Ascending aorta (tissue), 2 donors: ENCODE measurements at regions of chr10 and their contacts with region 1.

Region 1: GRCh38 chr10:49115015-49115795 is at the start of gene VSTM4:
- DNase-seq: peak in 1 of 2 donors; percentile 71
- H3K4me3 ChIP-seq: peak within 1 kb of the TSS; percentile 86 to 87
- H3K27ac ChIP-seq: peak within 1 kb of the TSS; percentile 86 to 94
- H3K4me1 ChIP-seq: peaks cover 12 to 48% of the 10 kb centered on the region in 2 donors
- H3K27me3 ChIP-seq: no peaks in the 10 kb centered on the region
- CTCF ChIP-seq: peak in 1 of 3 experiments; percentile 16
- total RNA-seq, gene VSTM4: 17.7 TPM

Region 2: GRCh38 chr10:48981310-48981907 is 133.8 kb before region 1 on chr10:
- intact Hi-C with region 1: loop called (anchors 1 kb)
- DNase-seq: peak in 1 of 2 donors; percentile 71
- H3K4me3 ChIP-seq: no peak overlapping the region
- H3K27ac ChIP-seq: no peak overlapping the region
- H3K4me1 ChIP-seq: peaks cover 0 to 3% of the 10 kb centered on the region in 2 donors
- H3K27me3 ChIP-seq: no peaks in the 10 kb centered on the region
- CTCF ChIP-seq: peak; percentile 80 to 91 (median 83)

Region 3: DNA sequence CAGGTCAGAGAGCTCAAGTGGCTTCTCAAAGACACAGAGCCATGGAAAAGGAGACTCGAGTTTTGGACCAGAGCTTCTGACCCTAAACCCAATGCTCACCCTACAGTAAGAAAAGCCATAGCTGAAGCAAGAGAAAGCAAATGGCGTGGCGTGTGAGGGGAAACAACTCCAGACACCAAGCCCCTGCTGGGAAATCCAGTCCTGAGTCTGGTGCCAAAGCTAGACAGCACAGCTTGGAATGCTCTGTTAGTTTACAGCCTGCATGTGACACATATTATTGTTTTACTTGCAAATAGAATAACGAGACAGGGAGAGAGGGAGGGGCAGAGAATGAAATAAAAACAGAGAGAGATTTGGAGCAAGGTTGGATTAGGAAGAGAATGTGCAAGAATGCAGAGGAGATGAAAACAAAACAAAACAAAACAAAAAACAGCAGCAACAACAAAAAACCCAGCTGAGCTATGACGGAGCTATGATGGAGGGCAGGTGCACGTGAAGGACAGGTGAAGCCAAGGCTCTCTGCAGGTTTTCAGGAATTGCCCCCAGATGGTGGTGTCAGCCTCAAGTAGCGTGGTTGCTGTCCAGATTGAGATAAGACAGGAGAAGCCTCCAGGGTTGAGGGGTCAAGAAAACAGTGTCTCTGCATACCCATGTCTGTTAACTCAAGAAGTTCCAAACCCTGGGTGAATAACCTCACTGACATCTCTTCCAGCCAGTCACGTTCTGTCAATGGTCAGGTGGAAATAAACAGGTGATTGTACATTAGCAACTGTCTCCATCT is 105.8 kb before region 1 on chr10:
- intact Hi-C with region 1: loop called (anchors 2 kb)
- DNase-seq: no peak
- H3K4me3 ChIP-seq: peak overlapping the region in 1 of 2 donors; percentile 28
- H3K27ac ChIP-seq: peak overlapping the region; percentile 39 to 40
- H3K4me1 ChIP-seq: peaks cover 5 to 23% of the 10 kb centered on the region in 2 donors
- H3K27me3 ChIP-seq: no peaks in the 10 kb centered on the region
- CTCF ChIP-seq: no peak

Region 4: DNA sequence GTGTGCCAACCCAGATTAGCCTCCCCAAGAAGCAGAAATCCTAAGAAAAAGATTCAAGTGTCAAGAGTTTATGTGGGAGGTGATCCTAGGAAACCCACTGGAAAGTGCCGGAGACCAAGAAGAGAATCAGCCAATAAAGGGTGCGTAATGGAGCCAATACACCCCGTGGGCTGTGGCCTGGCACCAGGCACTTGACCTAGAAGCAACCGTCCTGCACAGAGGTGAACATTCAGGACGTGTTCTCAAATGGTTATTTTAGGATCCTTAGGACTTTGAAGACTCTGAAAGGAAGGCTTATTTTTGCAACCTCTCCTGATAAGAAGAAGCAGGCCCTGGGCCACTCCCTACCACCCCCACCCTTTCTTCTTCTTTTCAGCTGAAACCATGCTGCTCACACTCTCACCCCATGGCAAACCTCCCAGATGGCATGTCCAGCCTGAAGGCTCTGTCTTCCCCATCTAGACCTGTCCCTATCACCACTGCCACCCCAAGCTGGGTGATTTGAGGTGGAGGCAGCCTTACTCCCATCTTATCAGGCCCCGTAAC is 46.5 kb before region 1 on chr10:
- intact Hi-C with region 1: no loop called
- DNase-seq: no peak
- H3K4me3 ChIP-seq: no peak overlapping the region
- H3K27ac ChIP-seq: no peak overlapping the region
- H3K4me1 ChIP-seq: peaks cover 0 to 4% of the 10 kb centered on the region in 2 donors
- H3K27me3 ChIP-seq: no peaks in the 10 kb centered on the region
- CTCF ChIP-seq: no peak

Region 5: GRCh38 chr10:49080071-49080470 is 35.1 kb before region 1 on chr10:
- intact Hi-C with region 1: loop called (anchors 2 kb)
- DNase-seq: peak in 1 of 2 donors; percentile 73
- H3K4me3 ChIP-seq: no peak overlapping the region
- H3K27ac ChIP-seq: peak overlapping the region; percentile 72 to 75
- H3K4me1 ChIP-seq: peaks cover 10 to 49% of the 10 kb centered on the region in 2 donors
- H3K27me3 ChIP-seq: no peaks in the 10 kb centered on the region
- CTCF ChIP-seq: no peak

Region 6: DNA sequence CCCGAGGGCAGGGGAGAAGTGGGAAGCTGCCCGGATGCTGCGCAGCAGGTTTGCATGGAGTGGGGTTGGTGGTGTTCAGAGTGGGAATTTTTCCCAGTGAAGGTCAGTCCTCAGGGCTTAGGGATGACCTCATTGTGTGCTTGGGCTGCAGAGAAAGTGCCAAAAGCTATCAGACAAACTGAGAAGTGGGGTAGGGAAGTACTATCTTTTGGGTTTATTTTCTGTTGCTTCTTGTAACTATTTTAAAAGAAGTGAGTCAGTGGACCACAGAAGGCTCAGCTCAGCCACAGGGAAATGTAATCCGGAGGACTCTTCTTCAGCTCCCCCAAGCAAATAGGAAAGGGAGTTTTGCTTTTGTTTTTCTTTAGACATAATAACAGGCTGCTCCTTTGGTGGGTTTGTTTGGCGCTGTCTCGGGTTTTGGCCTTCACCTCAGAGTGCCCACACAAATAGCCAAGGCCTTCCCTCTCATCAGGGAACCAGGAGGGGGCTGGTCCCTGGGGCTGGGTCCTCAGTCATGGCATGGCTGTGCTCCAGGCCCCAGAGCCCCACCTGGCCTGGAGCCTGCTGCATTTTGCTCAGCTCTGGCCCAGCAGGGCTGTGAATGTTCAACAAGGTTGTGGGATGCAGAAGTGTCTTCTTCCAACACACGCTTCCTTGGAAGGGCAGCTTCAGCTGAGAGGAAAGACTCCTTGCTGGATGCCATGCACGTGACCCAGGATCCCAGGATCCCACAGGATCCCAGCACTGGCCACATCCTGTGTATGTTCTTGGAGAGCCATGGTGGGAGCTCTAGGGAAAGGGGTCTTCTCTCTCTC is 24.0 kb after region 1 on chr10:
- intact Hi-C with region 1: loop called (anchors 2 kb)
- DNase-seq: no peak
- H3K4me3 ChIP-seq: no peak overlapping the region
- H3K27ac ChIP-seq: peak overlapping the region; percentile 69 to 77
- H3K4me1 ChIP-seq: peaks cover 0 to 27% of the 10 kb centered on the region in 2 donors
- H3K27me3 ChIP-seq: no peaks in the 10 kb centered on the region
- CTCF ChIP-seq: no peak

Region 7: GRCh38 chr10:49538381-49539319 is 423.4 kb after region 1 on chr10 and contains the start of gene ERCC6:
- intact Hi-C with region 1: loop called (anchors 10 kb)
- DNase-seq: peak; percentile 92 to 99
- H3K4me3 ChIP-seq: peak within 1 kb of the TSS; percentile 74 to 86
- H3K27ac ChIP-seq: peak within 1 kb of the TSS; percentile 87 to 94
- H3K4me1 ChIP-seq: peaks cover 11 to 35% of the 10 kb centered on the region in 2 donors
- H3K27me3 ChIP-seq: no peaks in the 10 kb centered on the region
- CTCF ChIP-seq: peak in 2 of 3 experiments; percentile 12 to 13
- total RNA-seq, gene ERCC6: 16.2 TPM